ENCODE measurements at regions of chr6 and their contacts with region 1.

Region 1: GRCh38 chr6:135909737-135910387 is 58.4 kb downstream of the PDE7B start:
- DNase-seq: peak; percentile 74
- ATAC-seq: peak; percentile 91
- H3K4me3 Mint-ChIP-seq: no peak overlapping the region
- H3K27ac Mint-ChIP-seq: no peak overlapping the region
- H3K4me1 Mint-ChIP-seq: peaks cover 12% of the 10 kb centered on the region
- H3K27me3 Mint-ChIP-seq: no peaks in the 10 kb centered on the region
- CTCF ChIP-seq: peak; percentile 69

Region 2: GRCh38 chr6:135675862-135676261 is 234.0 kb before region 1 on chr6:
- CTCF ChIA-PET with region 1: interaction called, 13 read pairs
- POLR2A ChIA-PET with region 1: interaction called, 4 read pairs
- intact Hi-C with region 1: loop called (anchors 10 kb)
- DNase-seq: peak; percentile 54
- ATAC-seq: peak; percentile 61
- H3K4me3 Mint-ChIP-seq: no peak overlapping the region
- H3K27ac Mint-ChIP-seq: no peak overlapping the region
- H3K4me1 Mint-ChIP-seq: peaks cover 28% of the 10 kb centered on the region
- H3K27me3 Mint-ChIP-seq: no peaks in the 10 kb centered on the region
- CTCF ChIP-seq: peak; percentile 74

Region 3: GRCh38 chr6:135680964-135681913 is 228.6 kb before region 1 on chr6:
- CTCF ChIA-PET with region 1: interaction called, 13 read pairs
- POLR2A ChIA-PET with region 1: interaction called, 4 read pairs
- intact Hi-C with region 1: loop called (anchors 10 kb)
- DNase-seq: no peak
- ATAC-seq: no peak
- H3K4me3 Mint-ChIP-seq: no peak overlapping the region
- H3K27ac Mint-ChIP-seq: no peak overlapping the region
- H3K4me1 Mint-ChIP-seq: peaks cover 3% of the 10 kb centered on the region
- H3K27me3 Mint-ChIP-seq: peaks cover 5% of the 10 kb centered on the region
- CTCF ChIP-seq: no peak

Region 4: GRCh38 chr6:135883045-135883444 is 26.8 kb before region 1 on chr6:
- CTCF ChIA-PET with region 1: interaction called, 15 read pairs
- POLR2A ChIA-PET with region 1: no interaction called
- intact Hi-C with region 1: no loop called
- DNase-seq: no peak
- ATAC-seq: no peak
- H3K4me3 Mint-ChIP-seq: no peak overlapping the region
- H3K27ac Mint-ChIP-seq: no peak overlapping the region
- H3K4me1 Mint-ChIP-seq: peaks cover 38% of the 10 kb centered on the region
- H3K27me3 Mint-ChIP-seq: no peaks in the 10 kb centered on the region
- CTCF ChIP-seq: no peak

Region 5: GRCh38 chr6:135922174-135922573 is 12.3 kb after region 1 on chr6:
- CTCF ChIA-PET with region 1: interaction called, 30 read pairs
- POLR2A ChIA-PET with region 1: no interaction called
- intact Hi-C with region 1: no loop called
- DNase-seq: no peak
- ATAC-seq: peak; percentile 24
- H3K4me3 Mint-ChIP-seq: no peak overlapping the region
- H3K27ac Mint-ChIP-seq: no peak overlapping the region
- H3K4me1 Mint-ChIP-seq: peaks cover 8% of the 10 kb centered on the region
- H3K27me3 Mint-ChIP-seq: no peaks in the 10 kb centered on the region
- CTCF ChIP-seq: no peak

Region 6: DNA sequence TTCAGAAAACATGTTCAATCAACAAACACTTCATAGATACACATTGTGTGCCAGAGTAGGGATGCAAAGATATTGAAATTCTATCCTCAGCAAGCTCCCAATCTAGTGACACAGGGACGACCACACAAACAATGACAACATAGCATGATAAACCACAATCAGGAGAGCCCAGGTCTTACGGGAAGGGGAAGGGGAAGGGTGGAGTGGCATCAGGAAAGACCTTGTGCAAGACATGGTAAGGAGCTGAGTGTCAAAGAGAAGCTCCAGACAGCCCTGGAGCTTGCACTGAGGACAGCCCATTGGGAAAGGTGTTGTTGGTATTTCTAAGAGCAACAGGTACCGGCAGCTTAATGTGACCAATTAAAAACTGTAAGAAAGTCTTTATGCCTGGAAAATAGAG is 45.2 kb after region 1 on chr6:
- CTCF ChIA-PET with region 1: no interaction called
- POLR2A ChIA-PET with region 1: no interaction called
- intact Hi-C with region 1: no loop called
- DNase-seq: no peak
- ATAC-seq: no peak
- H3K4me3 Mint-ChIP-seq: no peak overlapping the region
- H3K27ac Mint-ChIP-seq: no peak overlapping the region
- H3K4me1 Mint-ChIP-seq: no peaks in the 10 kb centered on the region
- H3K27me3 Mint-ChIP-seq: no peaks in the 10 kb centered on the region
- CTCF ChIP-seq: no peak

Measured in activated CD8-positive, alpha-beta T cell treated with anti-CD3 and anti-CD28 coated beads for 36 hours (primary cell).